PC-3 (cell line): ENCODE measurements at regions of chr1 and their contacts with region 1.

Region 1: GRCh38 chr1:119808972-119809550 is 2.2 kb downstream of the REG4 start:
- DNase-seq: peak; percentile 78
- ATAC-seq: peak; percentile 95
- H3K4me3 ChIP-seq: peak overlapping the region; percentile 10; the same call in 1 of the 2 replicates
- H3K27ac ChIP-seq: no peak overlapping the region
- H3K4me1 ChIP-seq: peaks cover 12% of the 10 kb centered on the region; the same call in 1 of the 2 replicates
- H3K27me3 ChIP-seq: no peaks in the 10 kb centered on the region
- CTCF ChIP-seq: peak; percentile 94

Region 2: GRCh38 chr1:119743781-119744597 is 65.1 kb before region 1 on chr1:
- CTCF ChIA-PET with region 1: interaction called, 3 read pairs
- POLR2A ChIA-PET with region 1: no interaction called
- intact Hi-C with region 1: loop called (anchors 1 kb)
- DNase-seq: peak; percentile 81
- ATAC-seq: peak; percentile 72
- H3K4me3 ChIP-seq: no peak overlapping the region
- H3K27ac ChIP-seq: no peak overlapping the region
- H3K4me1 ChIP-seq: no peaks in the 10 kb centered on the region
- H3K27me3 ChIP-seq: no peaks in the 10 kb centered on the region
- CTCF ChIP-seq: peak; percentile 92

Region 3: DNA sequence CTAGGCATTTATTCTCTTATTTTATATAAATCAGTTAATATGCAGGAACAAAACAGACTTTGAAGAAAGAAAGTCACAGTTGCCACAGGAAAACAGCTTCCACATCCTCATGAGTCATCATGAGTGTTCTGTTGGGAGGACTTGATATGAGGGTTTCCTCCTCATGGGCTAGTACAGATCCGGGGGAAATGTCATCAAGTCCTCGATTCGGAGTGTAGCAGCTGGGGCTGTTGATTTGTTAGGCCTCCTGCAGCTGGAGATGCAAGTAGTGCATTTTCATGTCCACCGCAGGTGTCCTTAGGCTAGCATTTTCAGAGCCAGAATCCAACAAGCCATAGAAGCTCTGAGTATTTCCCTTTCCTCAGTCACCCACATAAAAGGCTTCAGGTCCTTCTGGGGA is 50.6 kb after region 1 on chr1:
- CTCF ChIA-PET with region 1: no interaction called
- POLR2A ChIA-PET with region 1: no interaction called
- intact Hi-C with region 1: loop called (anchors 2 kb)
- DNase-seq: peak; percentile 87
- ATAC-seq: peak; percentile 99
- H3K4me3 ChIP-seq: 0 out of 2 replicates have a peak overlapping the region, but pooled peaks have one; percentile 6
- H3K27ac ChIP-seq: peak overlapping the region; percentile 73
- H3K4me1 ChIP-seq: peaks cover 29% of the 10 kb centered on the region
- H3K27me3 ChIP-seq: no peaks in the 10 kb centered on the region
- CTCF ChIP-seq: no peak

Region 4: DNA sequence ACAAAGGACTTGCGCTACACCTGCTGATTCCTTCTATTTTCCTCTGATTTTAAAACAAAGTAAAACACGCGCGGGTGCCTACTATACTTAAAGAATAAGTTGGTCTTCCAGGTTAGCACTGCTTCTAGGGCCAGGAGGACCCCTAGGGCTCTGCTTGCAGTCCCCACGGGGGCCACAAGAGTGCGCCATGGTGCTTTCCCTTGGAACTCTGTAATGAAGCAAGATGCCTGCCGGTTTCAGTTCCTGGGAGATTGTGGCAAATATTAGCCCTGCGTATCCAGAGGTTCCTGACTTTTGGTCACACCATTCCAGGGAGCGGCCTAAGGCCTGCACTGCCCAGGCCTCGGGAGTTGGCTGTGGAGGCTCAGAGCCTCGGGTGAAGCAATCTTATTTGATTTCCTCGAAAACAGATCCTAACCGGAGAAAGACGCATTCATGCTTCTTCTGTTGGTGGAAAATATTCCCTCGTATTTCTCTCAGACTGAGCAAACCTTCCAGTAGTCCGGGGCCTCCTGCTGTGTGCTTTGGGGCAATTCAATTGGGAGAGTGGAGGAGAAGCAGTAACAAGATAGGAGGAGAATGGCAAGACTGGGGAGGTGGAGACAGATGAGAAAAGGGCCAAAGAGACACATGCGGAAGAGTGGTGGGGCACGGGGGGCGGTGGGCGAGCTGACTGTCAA is 62.0 kb after region 1 on chr1:
- CTCF ChIA-PET with region 1: interaction called, 4 read pairs
- POLR2A ChIA-PET with region 1: no interaction called
- intact Hi-C with region 1: loop called (anchors 1 kb)
- DNase-seq: peak; percentile 92
- ATAC-seq: peak; percentile 63
- H3K4me3 ChIP-seq: no peak overlapping the region
- H3K27ac ChIP-seq: no peak overlapping the region
- H3K4me1 ChIP-seq: peaks cover 17% of the 10 kb centered on the region
- H3K27me3 ChIP-seq: no peaks in the 10 kb centered on the region
- CTCF ChIP-seq: peak; percentile 97

Region 5: GRCh38 chr1:119948342-119949214 is 139.5 kb after region 1 on chr1:
- CTCF ChIA-PET with region 1: no interaction called
- POLR2A ChIA-PET with region 1: no interaction called
- intact Hi-C with region 1: loop called (anchors 1 kb)
- DNase-seq: peak; percentile 82
- ATAC-seq: peak; percentile 82
- H3K4me3 ChIP-seq: no peak overlapping the region
- H3K27ac ChIP-seq: no peak overlapping the region
- H3K4me1 ChIP-seq: peaks cover 21% of the 10 kb centered on the region
- H3K27me3 ChIP-seq: no peaks in the 10 kb centered on the region
- CTCF ChIP-seq: peak; percentile 93